ENCODE measurements at regions of chr14 and their contacts with region 1.

Region 1: GRCh38 chr14:50109342-50109741 is 7.0 kb downstream of the VCPKMT start:
- DNase-seq: peak; percentile 55

Region 2: GRCh38 chr14:49867831-49868723 is 241.3 kb before region 1 on chr14:
- in situ Hi-C with region 1: loop called (anchors 10 kb)
- DNase-seq: peak; percentile 92

Region 3: DNA sequence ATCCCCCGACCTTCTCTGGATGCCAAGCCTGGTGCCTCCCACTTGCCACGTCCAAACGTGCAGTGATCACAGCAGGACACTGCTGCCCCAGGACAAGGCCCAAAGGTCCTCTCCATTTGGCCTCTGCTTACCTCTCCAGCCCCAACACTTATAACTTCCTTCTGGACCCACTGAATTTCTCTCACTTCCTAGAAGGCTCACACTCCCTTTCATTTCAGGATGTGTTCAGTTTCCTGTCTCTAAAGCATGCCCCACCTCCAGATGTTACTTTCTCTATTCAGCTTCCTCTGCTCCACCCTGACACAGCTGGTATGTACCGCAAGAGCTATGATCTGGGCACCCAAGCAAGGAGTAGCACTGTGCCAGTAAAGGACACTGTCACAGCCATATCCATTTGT is 254.4 kb after region 1 on chr14:
- in situ Hi-C with region 1: no loop called
- DNase-seq: no peak

Measured in SK-MEL-5 (cell line).